WTC11 (cell line): ENCODE measurements at regions of chr6 and their contacts with region 1.

Region 1: GRCh38 chr6:31827286-31828079 is at the start of gene HSPA1B:
- DNase-seq: peak; percentile 98
- ATAC-seq: peak; percentile 93
- H3K4me3 Mint-ChIP-seq: peak within 1 kb of the TSS; percentile 75
- H3K27ac Mint-ChIP-seq: peak within 1 kb of the TSS; percentile 99
- H3K4me1 Mint-ChIP-seq: peaks cover 44% of the 10 kb centered on the region
- H3K27me3 Mint-ChIP-seq: no peaks in the 10 kb centered on the region
- CTCF ChIP-seq: no peak
- total RNA-seq, gene HSPA1B: 75.3 to 105 TPM (median 96.4 TPM) in 3 replicates

Region 2: DNA sequence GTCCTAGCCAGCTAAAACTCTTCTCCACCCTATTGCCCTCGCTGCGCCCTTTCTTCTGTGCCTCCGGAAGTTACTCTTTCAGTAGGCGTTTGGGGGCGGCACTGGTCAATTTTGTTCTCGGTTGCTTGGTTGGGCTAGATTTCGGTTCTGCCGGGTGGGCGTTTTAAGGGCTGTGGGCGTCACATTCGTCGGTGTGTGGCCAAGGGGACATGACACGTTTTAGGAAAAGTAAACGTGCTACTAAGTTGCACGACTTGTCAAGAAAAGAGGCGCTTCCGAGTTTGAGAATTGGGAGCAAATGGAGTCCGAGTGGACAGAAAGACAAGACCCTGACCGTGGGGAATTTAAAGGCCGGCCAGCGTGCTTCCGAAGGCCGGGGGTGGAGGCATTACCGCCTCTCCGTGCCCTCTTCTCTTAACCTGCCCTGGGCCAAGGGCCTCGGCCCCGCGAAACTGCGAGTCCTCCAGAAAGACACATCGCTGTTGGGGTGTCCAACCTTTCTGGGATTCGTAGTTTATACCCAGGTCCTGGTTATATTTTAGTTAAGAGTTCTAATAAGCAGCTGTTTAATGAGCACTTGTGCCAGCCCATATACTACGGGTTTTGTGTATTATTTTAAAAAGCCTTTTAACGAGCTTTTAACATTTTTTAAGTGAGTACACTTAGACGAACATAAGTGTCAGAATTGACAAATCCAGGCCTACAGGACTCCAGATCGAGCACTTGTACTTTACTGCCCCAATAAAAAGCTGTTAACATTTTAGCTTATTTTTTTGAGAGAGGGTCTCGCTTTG is 174.4 kb before region 1 on chr6:
- CTCF ChIA-PET with region 1: interaction called, 5 read pairs
- POLR2A ChIA-PET with region 1: interaction called, 10 read pairs
- DNase-seq: peak; percentile 81
- ATAC-seq: peak; percentile 79
- H3K4me3 Mint-ChIP-seq: peak overlapping the region; percentile 91
- H3K27ac Mint-ChIP-seq: peak overlapping the region; percentile 100
- H3K4me1 Mint-ChIP-seq: peaks cover 20% of the 10 kb centered on the region
- H3K27me3 Mint-ChIP-seq: no peaks in the 10 kb centered on the region
- CTCF ChIP-seq: no peak

Region 3: GRCh38 chr6:31739639-31740396 is 87.7 kb before region 1 on chr6 and contains the start of gene MSH5:
- CTCF ChIA-PET with region 1: interaction called, 11 read pairs
- POLR2A ChIA-PET with region 1: interaction called, 15 read pairs
- DNase-seq: peak; percentile 98
- ATAC-seq: peak; percentile 89
- H3K4me3 Mint-ChIP-seq: peak within 1 kb of the TSS; percentile 80
- H3K27ac Mint-ChIP-seq: peak within 1 kb of the TSS; percentile 85
- H3K4me1 Mint-ChIP-seq: peaks cover 42% of the 10 kb centered on the region
- H3K27me3 Mint-ChIP-seq: no peaks in the 10 kb centered on the region; the same call in 1 of the 2 replicates
- CTCF ChIP-seq: no peak
- total RNA-seq, gene MSH5: 43.1 to 62.3 TPM (median 56.1 TPM) in 3 replicates

Region 4: DNA sequence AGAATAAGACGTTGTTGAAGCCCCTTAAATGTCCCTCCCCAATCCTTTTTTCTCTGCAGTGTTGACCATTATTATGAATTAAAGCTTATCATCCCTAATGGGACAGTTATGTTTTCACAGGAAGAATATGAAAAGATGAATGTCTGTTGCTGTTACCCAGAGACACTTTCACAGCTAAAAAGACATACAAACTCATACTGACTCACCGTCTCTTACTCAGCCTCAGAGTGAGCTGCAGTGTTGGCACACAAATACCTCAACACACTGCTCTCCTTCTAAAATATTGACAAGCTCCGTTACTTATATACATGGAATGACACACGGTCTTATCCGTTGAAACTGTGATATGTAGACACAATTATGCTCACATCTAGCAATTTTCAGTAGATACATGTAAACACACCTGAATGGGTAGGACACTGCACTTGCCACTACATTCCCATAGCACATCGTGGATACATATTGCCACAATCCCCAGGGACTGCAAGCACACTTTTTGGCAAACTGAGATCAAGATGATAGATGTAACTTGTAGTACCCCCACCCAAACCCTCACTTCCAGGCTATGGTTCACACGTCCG is 74.7 kb before region 1 on chr6:
- CTCF ChIA-PET with region 1: no interaction called
- POLR2A ChIA-PET with region 1: no interaction called
- DNase-seq: no peak
- ATAC-seq: no peak
- H3K4me3 Mint-ChIP-seq: no peak overlapping the region
- H3K27ac Mint-ChIP-seq: peak overlapping the region; percentile 12; the same call in 1 of the 2 replicates
- H3K4me1 Mint-ChIP-seq: no peaks in the 10 kb centered on the region
- H3K27me3 Mint-ChIP-seq: no peaks in the 10 kb centered on the region
- CTCF ChIP-seq: no peak

Region 5: GRCh38 chr6:31795616-31796298 is 31.7 kb before region 1 on chr6 and contains the start of gene VARS1:
- CTCF ChIA-PET with region 1: interaction called, 22 read pairs
- POLR2A ChIA-PET with region 1: interaction called, 12 read pairs
- DNase-seq: peak; percentile 96
- ATAC-seq: peak; percentile 84
- H3K4me3 Mint-ChIP-seq: peak within 1 kb of the TSS; percentile 99
- H3K27ac Mint-ChIP-seq: peak within 1 kb of the TSS; percentile 97
- H3K4me1 Mint-ChIP-seq: peaks cover 9% of the 10 kb centered on the region
- H3K27me3 Mint-ChIP-seq: no peaks in the 10 kb centered on the region
- CTCF ChIP-seq: peak; percentile 57
- total RNA-seq, gene VARS1: 147 to 177 TPM (median 161 TPM) in 3 replicates

Region 6: DNA sequence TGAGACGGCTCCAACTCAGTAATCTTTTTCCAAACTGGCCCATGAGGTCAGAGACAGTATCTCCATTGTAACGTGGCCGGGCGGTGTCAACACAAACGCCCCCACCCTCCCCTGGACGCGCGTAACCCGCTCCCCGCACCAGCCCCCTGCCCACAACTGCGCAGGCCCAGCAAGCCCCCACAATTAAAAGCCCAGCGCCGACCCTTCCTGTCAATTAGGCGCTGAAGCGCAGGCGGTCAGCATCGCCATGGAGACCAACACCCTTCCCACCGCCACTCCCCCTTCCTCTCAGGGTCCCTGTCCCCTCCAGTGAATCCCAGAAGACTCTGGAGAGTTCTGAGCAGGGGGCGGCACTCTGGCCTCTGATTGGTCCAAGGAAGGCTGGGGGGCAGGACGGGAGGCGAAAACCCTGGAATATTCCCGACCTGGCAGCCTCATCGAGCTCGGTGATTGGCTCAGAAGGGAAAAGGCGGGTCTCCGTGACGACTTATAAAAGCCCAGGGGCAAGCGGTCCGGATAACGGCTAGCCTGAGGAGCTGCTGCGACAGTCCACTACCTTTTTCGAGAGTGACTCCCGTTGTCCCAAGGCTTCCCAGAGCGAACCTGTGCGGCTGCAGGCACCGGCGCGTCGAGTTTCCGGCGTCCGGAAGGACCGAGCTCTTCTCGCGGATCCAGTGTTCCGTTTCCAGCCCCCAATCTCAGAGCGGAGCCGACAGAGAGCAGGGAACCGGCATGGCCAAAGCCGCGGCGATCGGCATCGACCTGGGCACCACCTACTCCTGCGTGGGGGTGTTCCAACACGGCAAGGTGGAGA is 12.3 kb before region 1 on chr6 and contains the starts of genes HSPA1A and HSPA1L:
- CTCF ChIA-PET with region 1: interaction called, 8 read pairs
- POLR2A ChIA-PET with region 1: interaction called, 18 read pairs
- DNase-seq: peak; percentile 98
- ATAC-seq: peak; percentile 91
- H3K4me3 Mint-ChIP-seq: peak within 1 kb of the TSS; percentile 85
- H3K27ac Mint-ChIP-seq: peak within 1 kb of the TSS; percentile 98
- H3K4me1 Mint-ChIP-seq: peaks cover 27% of the 10 kb centered on the region
- H3K27me3 Mint-ChIP-seq: no peaks in the 10 kb centered on the region; the same call in 1 of the 2 replicates
- CTCF ChIP-seq: no peak
- total RNA-seq, gene HSPA1A: 57.2 to 80.1 TPM (median 75.8 TPM) in 3 replicates
- total RNA-seq, gene HSPA1L: 1.2 to 2.1 TPM (median 1.9 TPM) in 3 replicates